ENCODE measurements at regions of chr6 and their contacts with region 1.

Region 1: DNA sequence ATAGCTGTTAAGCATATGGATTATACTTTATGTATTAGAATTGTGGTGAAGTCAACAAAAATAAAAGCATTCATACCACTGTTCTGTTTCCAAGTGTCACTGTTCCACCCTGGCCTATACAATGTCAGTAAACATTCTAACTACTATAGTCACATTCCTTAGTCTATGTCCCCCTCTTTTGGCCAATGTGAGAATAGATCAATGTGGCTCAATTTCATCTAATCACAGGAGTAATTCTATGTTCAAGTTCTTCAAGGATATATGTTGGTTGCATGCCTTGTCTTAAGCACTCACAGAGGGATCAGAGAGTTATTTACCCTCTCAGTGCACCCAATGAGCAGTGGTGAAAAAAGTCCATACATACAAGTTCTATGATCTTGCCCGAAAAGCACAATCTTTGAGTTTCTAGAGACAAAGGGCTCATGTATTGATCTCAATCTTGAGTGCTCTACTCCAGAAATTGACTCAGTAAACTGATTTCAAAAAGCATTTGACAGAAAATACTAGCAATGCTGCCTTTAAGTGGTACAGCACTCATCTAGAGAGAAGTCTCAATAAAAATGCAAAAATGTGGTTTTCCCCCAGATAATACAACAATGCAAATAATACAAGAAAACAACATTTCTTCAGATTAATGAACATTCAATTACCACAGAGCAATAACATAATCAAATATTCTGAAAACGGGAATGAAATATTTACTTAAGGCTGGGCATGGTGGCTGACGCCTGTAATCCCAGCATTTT is 16.5 kb downstream of the SMLR1 start:
- DNase-seq: no peak
- H3K4me3 Mint-ChIP-seq: no peak overlapping the region
- H3K27ac Mint-ChIP-seq: no peak overlapping the region
- H3K4me1 Mint-ChIP-seq: peaks cover 2% of the 10 kb centered on the region
- H3K27me3 Mint-ChIP-seq: no peaks in the 10 kb centered on the region

Region 2: DNA sequence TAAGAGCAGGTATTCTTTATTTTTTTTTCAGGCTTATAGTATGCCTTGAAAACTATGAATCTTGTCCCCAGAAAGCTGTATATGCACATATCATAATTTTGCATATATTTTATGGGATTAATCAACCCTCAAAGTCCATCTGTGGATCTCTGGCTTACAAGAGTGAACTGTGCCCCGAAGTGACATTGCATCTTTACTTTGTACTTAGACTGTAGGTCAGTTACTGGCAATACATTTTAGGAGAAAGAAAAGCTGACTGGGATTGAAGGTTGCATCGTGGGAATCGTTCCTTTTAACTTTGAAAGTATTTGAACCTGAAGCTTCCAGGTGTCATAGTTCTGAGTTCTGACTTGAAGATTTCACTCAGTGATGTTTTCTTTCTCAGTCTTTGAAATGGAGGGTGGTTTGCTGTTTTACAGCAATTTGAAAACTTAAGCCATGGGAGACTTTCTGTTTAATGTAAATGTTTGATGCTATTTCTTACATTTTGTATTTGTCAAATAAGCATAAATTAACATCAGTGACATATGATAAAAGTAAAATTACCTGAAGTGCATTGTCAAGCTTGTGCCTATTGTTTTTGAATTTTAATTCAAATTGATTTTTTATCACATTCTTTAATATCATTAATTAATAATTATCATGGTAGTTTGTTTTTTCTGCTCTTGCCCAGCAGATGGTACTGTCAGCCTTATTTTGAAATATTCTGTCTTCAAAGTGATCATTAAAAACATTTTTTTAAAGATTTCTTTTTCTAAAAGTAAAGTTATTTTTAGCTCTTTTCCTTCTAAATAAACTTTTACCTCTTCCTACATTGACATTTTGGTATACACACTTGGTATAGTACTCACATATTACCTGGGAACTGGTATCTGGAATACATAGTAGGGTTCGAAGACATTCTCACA is 796.4 kb before region 1 on chr6:
- CTCF ChIA-PET with region 1: no interaction called
- intact Hi-C with region 1: loop called (anchors 5 kb)
- DNase-seq: no peak
- H3K4me3 Mint-ChIP-seq: no peak overlapping the region
- H3K27ac Mint-ChIP-seq: no peak overlapping the region
- H3K4me1 Mint-ChIP-seq: no peaks in the 10 kb centered on the region
- H3K27me3 Mint-ChIP-seq: no peaks in the 10 kb centered on the region

Region 3: DNA sequence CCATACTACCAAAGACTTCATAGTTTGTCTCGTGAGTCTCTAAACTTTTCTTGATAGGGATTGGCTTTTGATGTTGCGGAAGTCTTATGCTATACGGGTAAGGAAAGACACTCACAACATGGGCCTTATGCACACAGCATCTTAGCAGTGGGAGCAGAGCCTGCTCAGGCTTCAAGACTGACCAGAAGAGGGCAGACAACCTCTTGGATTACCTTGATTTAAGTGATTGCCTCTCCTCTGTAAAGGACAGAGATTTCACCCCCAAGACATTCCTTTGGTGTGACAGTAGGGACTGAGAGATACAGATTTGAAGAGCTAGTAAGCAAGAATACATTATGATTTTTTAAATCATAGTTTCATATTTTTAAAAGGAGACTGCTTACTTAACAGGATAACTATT is 549.9 kb before region 1 on chr6:
- CTCF ChIA-PET with region 1: interaction called, 3 read pairs
- intact Hi-C with region 1: loop called (anchors 1 kb)
- DNase-seq: peak; percentile 37
- H3K4me3 Mint-ChIP-seq: no peak overlapping the region
- H3K27ac Mint-ChIP-seq: no peak overlapping the region
- H3K4me1 Mint-ChIP-seq: no peaks in the 10 kb centered on the region
- H3K27me3 Mint-ChIP-seq: no peaks in the 10 kb centered on the region

Region 4: GRCh38 chr6:130697995-130698535 is 145.7 kb before region 1 on chr6:
- CTCF ChIA-PET with region 1: interaction called, 11 read pairs
- intact Hi-C with region 1: loop called (anchors 1 kb)
- DNase-seq: peak; percentile 79
- H3K4me3 Mint-ChIP-seq: no peak overlapping the region
- H3K27ac Mint-ChIP-seq: no peak overlapping the region
- H3K4me1 Mint-ChIP-seq: peaks cover 19% of the 10 kb centered on the region
- H3K27me3 Mint-ChIP-seq: no peaks in the 10 kb centered on the region

Region 5: GRCh38 chr6:130724089-130724488 is 119.7 kb before region 1 on chr6:
- CTCF ChIA-PET with region 1: no interaction called
- intact Hi-C with region 1: no loop called
- DNase-seq: no peak
- H3K4me3 Mint-ChIP-seq: no peak overlapping the region
- H3K27ac Mint-ChIP-seq: no peak overlapping the region
- H3K4me1 Mint-ChIP-seq: peaks cover 10% of the 10 kb centered on the region
- H3K27me3 Mint-ChIP-seq: peaks cover 2% of the 10 kb centered on the region

Measured in activated naive CD4-positive, alpha-beta T cell treated with anti-CD3 and anti-CD28 coated beads for 36 hours (primary cell).